ENCODE measurements at regions of chr6 and their contacts with region 1.

Region 1: DNA sequence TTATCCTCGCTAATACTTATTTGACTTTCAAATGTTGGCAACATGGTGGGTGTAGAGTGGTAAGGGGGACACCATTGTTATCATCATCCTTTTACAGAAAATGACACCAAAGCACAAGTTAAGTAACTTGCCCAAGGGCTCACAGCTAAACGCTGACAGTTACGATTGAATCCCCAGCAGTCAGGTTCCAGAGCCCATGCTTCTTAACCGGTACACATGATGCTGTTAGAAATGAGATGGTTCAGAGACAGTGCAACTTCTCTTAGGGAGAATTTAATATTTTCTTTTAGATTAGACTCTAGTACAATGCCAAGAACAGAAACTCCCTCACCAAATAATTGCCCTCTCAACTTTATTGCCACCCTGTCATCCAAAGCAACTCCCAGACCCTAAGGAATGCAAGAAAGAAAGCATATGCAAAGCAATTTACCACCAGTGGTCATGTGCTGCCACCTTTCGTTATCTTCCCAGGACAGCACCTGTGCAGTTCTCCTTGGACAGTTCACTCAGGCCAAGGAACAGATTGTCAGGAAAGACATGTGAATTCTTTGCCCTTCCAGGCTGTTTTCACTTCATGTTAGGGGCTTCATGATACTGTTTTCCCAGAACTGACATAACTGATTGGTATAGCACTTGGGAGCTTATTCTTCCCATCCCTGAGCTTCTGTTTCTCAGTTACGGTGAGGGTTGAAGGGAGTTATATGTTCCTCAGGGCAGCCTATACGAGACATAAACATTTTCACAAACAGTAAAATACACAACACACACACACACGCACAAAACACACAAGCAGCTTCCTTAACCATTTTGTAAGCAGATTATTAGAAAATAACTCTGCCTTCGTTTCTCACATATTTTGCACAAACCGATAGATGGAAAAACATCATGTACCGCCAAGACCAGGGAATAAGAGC is 5.1 kb downstream of the HLA-DMA start:
- DNase-seq: peak; percentile 56 to 69 (median 62)
- H3K4me3 ChIP-seq: no peak overlapping the region
- H3K27ac ChIP-seq: no peak overlapping the region
- H3K4me1 ChIP-seq: peaks cover 34 to 68% (median 63%) of the 10 kb centered on the region in 4 experiments
- H3K27me3 ChIP-seq: no peaks in the 10 kb centered on the region

Region 2: DNA sequence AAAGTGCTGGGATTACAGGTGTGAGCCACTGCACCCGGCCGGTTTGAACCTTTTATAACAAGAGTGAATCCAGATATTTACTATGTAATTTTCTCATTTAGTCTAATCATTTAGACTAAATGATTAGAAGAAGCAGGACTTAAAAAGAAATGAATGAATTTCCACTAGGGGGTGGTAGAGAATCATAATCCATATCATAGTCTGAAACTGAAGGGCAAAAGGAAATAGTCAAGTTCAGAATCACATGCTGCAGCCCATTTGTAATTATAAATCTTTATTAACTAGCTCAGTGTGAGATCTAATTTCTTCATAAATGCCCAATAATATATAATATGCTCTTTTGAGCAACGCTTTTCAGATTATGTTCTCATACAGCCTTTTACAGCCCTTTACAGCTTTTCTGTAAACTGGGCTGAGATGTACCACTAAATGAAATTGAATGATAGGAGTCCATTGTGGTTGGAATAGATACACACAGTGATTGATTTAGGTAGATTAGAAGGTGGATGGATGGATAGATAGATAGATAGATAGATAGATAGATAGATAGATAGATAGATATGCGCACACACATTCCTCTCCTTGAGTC is 62.0 kb before region 1 on chr6:
- CTCF ChIA-PET with region 1: interaction called, 26 read pairs
- POLR2A ChIA-PET with region 1: no interaction called
- DNase-seq: peak; percentile 80 to 92 (median 86)
- H3K4me3 ChIP-seq: no peak overlapping the region
- H3K27ac ChIP-seq: no peak overlapping the region
- H3K4me1 ChIP-seq: peaks cover 0 to 2% (median 0%) of the 10 kb centered on the region in 4 experiments
- H3K27me3 ChIP-seq: peaks cover 0 to 3% (median 0%) of the 10 kb centered on the region in 5 experiments

Measured in common myeloid progenitor, CD34-positive (primary cell).